ENCODE measurements at regions of chr20 and their contacts with region 1.

Region 1: GRCh38 chr20:8389381-8390036 is 257.4 kb downstream of the PLCB1 start:
- DNase-seq: no peak
- H3K4me3 ChIP-seq: no peak overlapping the region
- H3K27ac ChIP-seq: peak overlapping the region in 3 of 8 donors; percentile 16 to 35 (median 20)
- H3K4me1 ChIP-seq: peaks cover 0 to 30% (median 9%) of the 10 kb centered on the region in 6 donors
- H3K27me3 ChIP-seq: no peaks in the 10 kb centered on the region
- CTCF ChIP-seq: peak in 9 of 11 experiments; percentile 20 to 65 (median 51)
- POLR2A ChIP-seq: no peak

Region 2: DNA sequence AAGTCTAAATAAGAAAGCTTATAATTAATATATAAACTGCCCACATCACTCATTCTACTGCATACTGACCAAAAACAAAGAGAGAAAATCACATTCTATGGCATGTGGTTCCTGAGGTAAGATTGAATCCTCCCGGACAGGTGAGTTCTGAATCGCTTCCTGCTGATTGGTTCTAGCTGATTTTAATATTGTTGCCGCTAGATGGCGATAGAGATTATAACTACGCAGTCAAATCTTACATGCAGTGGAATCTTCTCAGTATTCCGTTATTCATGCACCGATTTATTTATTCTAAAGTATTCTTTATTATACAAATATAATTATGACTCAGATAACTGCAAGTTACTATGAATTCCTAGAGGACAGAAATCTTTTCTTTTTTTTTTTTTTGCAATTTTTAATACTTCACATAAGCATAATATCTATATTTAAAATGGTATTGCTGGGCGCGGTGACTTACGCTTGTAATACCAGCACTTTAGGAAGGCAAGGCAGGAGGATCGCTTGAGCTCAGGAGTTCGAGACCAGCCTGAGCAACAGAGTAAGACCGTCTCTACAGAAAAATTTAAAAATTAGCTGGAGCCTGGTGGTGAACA is 345.7 kb before region 1 on chr20:
- intact Hi-C with region 1: loop called (anchors 10 kb)
- DNase-seq: no peak
- H3K4me3 ChIP-seq: no peak overlapping the region
- H3K27ac ChIP-seq: no peak overlapping the region
- H3K4me1 ChIP-seq: peaks cover 0 to 7% (median 6%) of the 10 kb centered on the region in 6 donors
- H3K27me3 ChIP-seq: peaks cover 0 to 14% (median 0%) of the 10 kb centered on the region in 7 donors
- CTCF ChIP-seq: peak; percentile 39 to 82 (median 65)
- POLR2A ChIP-seq: no peak

Region 3: GRCh38 chr20:8131598-8132483 is 257.7 kb before region 1 on chr20 and contains the start of gene PLCB1:
- intact Hi-C with region 1: loop called (anchors 5 kb)
- DNase-seq: peak; percentile 95
- H3K4me3 ChIP-seq: peak within 1 kb of the TSS; percentile 59 to 90 (median 68)
- H3K27ac ChIP-seq: peak within 1 kb of the TSS; percentile 38 to 86 (median 75)
- H3K4me1 ChIP-seq: peaks cover 5 to 36% (median 27%) of the 10 kb centered on the region in 6 donors
- H3K27me3 ChIP-seq: peaks cover 0 to 44% (median 4%) of the 10 kb centered on the region in 7 donors
- CTCF ChIP-seq: peak; percentile 70 to 93 (median 86)
- POLR2A ChIP-seq: no peak
- total RNA-seq, gene PLCB1: 14.8 to 33.7 (median 18.7) TPM

Region 4: GRCh38 chr20:8208998-8209440 is 180.5 kb before region 1 on chr20:
- intact Hi-C with region 1: no loop called
- DNase-seq: no peak
- H3K4me3 ChIP-seq: no peak overlapping the region
- H3K27ac ChIP-seq: no peak overlapping the region
- H3K4me1 ChIP-seq: peaks cover 0 to 19% (median 10%) of the 10 kb centered on the region in 6 donors
- H3K27me3 ChIP-seq: no peaks in the 10 kb centered on the region
- CTCF ChIP-seq: no peak
- POLR2A ChIP-seq: no peak

Measured in spleen (tissue), 13 donors.